HEK293T (cell line): ENCODE measurements at regions of chr22 and their contacts with region 1.

Region 1: DNA sequence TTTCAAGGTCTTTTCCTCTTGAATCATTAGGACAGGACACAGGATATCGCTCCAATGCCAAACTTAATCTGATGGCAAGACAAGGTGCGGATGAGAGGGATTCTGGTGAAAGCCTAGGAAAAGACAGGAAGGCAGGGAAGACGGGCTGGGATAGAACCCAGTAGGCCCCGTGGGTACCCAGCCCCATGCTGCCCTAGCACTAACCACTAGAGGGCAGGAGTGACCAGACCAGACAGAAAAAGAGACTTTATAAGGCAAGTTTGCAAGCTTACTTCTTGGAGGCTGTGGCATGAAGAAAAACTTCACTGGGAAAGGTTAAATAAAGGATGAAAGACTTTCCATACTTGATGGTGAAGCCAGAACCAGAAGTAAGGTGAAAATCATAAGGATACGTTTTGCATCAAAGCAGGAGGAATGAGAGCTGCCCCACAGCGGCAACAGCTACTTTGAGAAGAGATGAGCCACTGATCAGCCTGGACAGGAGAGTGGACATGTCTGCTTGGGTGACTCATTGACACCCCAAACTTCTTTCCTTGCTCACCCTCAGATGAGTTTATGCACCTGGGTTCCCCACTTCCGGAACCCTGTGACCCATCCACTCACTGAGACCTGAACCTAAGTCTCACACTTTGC is 39.8 kb downstream of the SYN3 start:
- DNase-seq: peak; percentile 75

Region 2: DNA sequence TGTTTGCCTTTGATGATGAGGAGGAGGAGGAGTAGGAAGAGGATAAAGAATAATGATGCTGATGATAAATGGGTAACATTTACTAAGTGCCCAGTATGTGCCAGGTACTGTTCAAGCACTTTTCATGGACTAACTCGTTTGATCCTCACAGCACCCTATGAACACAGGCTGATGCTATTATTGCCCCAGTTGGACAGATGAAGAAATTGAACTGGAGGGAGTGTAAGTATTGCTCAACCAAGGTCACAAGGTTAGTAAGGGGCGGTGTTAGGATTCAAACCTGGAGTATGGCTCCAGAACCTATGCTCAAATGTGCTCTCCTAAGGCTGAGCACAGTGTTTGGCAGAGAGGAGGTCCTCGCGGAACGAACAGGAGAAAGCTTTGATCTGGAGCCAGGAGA is 38.7 kb before region 1 on chr22:
- CTCF ChIA-PET with region 1: no interaction called
- POLR2A ChIA-PET with region 1: no interaction called
- DNase-seq: no peak

Region 3: DNA sequence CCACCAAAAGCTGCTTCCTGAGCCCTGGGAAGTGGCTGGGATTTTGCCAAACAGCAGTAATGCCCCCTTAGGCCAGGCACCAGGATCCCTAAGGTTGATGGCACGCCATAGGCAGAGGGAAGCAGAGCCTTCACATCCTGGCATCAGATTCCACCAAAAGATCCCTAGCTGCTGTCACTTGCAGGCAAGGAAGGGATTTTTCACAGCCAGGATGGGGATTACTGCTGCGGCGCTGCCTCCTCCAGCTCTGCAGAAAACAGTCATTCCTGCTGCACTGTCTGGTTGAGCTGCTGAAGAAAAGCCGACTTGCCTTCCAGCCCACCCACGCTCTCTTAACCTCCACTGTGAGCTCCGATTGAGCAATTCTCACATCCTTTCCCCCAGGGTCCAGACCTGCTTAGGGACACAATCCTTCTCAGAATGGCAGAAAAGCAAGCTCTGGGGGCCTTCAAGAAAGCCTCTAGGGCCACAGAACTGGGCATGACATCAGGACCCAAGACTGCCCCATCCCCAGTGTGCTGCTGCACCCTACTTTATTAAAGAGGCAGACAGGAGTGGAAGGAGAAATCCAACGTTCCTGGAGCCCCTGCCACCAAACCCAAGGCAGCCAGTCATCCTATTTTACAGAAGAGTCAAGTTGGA is 19.9 kb after region 1 on chr22:
- CTCF ChIA-PET with region 1: interaction called, 10 read pairs
- POLR2A ChIA-PET with region 1: no interaction called
- DNase-seq: no peak

Region 4: DNA sequence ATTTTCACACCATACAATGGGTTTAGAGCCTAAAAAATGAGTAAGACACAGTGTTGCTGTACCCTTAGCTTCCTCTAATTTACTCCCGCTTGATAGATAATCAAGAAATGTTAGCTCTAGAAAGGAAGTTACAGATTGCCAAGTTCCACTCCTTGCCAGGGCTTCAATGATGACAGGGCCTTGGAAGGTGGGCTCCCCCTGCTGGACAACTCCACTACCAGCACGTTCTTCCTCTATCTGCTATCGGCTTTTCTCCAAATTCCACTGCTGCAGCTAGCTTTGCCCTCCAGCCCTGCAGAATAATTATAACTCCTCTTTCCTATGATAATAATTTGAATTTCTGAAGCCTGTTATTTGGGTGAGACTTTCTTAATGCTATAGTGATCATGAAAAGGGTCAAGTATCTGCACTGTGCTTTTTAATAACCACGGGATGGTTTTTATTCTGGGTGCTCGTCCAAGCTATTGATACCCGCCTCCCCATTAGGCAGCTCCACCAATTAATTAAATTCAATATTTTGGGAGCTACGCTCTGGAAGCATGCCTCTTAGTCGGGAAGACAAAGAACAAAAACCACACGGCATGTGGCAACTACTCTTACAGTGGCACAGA is 30.9 kb after region 1 on chr22:
- CTCF ChIA-PET with region 1: interaction called, 41 read pairs
- POLR2A ChIA-PET with region 1: no interaction called
- DNase-seq: peak; percentile 84